Motor neuron (in vitro differentiated cells): ENCODE measurements at regions of chr4 and their contacts with region 1.

Region 1: GRCh38 chr4:150209140-150209829 is 131.0 kb downstream of the DCLK2 start:
- ATAC-seq: peak in 4 of 8 experiments; percentile 25 to 72 (median 70)
- H3K4me3 ChIP-seq: no peak overlapping the region
- H3K27ac ChIP-seq: no peak overlapping the region
- H3K4me1 ChIP-seq: peaks cover 4% of the 10 kb centered on the region in 2 donors

Region 2: GRCh38 chr4:149933883-149934282 is 275.4 kb before region 1 on chr4:
- in situ Hi-C with region 1: no loop called
- ATAC-seq: no peak
- H3K4me3 ChIP-seq: no peak overlapping the region
- H3K27ac ChIP-seq: no peak overlapping the region
- H3K4me1 ChIP-seq: no peaks in the 10 kb centered on the region

Region 3: DNA sequence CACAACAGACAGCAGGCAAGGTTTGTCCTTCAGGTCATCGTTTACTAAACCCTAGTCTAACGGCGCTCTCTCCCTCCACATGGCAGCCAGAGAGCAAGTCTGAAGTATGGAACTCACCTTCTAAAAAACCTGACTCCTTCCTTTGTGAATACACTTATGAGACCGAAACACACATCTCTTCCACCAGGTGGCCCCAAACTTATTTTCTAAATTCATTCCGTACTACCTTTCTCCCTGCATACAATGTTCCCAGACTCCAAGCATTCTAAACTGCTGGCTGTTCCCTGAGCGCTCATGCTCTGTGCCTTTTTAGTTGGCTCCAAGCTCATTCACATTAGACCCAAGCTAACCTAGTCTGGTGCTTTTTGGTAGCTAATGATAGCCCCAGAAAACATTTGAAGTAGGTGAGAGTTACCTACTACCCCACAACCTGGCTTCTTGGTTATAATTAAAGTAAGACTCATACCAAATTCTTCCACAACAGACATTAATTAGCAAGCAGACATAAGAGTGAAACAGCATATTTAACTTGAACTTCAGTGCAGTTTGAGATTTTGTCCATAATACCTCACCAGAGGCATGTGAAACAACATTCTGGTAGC is 198.7 kb before region 1 on chr4:
- in situ Hi-C with region 1: loop called in 3 of 9 experiments (anchors 25 kb)
- ATAC-seq: peak; percentile 44 to 97 (median 80)
- H3K4me3 ChIP-seq: no peak overlapping the region
- H3K27ac ChIP-seq: no peak overlapping the region
- H3K4me1 ChIP-seq: peaks cover 0 to under 1% of the 10 kb centered on the region in 2 donors

Region 4: DNA sequence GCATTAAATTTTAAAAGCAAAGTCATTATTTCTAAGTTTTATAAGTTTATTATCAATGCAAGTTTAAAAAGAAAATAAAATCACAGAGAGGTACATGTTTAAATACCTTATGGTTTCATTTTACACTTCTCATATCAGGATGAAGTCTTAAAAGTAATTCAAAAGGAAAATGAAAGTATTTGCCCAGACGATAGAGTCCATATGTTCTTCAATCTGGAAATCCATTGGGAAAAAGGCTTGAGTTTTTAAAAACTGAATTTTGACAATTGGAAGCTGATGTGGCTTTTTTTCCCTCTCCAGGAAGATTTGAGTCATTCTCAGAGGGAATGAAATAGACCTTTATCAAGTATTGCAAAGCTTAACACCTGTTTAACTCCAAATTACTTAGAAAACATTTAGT is 409.8 kb after region 1 on chr4:
- in situ Hi-C with region 1: no loop called
- ATAC-seq: no peak
- H3K4me3 ChIP-seq: no peak overlapping the region
- H3K27ac ChIP-seq: no peak overlapping the region
- H3K4me1 ChIP-seq: no peaks in the 10 kb centered on the region